ENCODE measurements at regions of chr22 and their contacts with region 1.

Region 1: GRCh38 chr22:36239401-36240171 is at the start of gene APOL2:
- DNase-seq: peak; percentile 92 to 95
- H3K4me3 ChIP-seq: peak within 1 kb of the TSS; percentile 16 to 45 (median 40)
- H3K27ac ChIP-seq: peak within 1 kb of the TSS; percentile 67 to 92 (median 81)
- H3K4me1 ChIP-seq: peaks cover 24 to 30% of the 10 kb centered on the region in 2 donors
- H3K27me3 ChIP-seq: no peaks in the 10 kb centered on the region
- CTCF ChIP-seq: peak in 5 of 6 experiments; percentile 15 to 68 (median 57)
- POLR2A ChIP-seq: peak in 1 of 2 donors; percentile 73
- total RNA-seq, gene APOL2: 31.1 to 45.6 (median 35.6) TPM

Region 2: DNA sequence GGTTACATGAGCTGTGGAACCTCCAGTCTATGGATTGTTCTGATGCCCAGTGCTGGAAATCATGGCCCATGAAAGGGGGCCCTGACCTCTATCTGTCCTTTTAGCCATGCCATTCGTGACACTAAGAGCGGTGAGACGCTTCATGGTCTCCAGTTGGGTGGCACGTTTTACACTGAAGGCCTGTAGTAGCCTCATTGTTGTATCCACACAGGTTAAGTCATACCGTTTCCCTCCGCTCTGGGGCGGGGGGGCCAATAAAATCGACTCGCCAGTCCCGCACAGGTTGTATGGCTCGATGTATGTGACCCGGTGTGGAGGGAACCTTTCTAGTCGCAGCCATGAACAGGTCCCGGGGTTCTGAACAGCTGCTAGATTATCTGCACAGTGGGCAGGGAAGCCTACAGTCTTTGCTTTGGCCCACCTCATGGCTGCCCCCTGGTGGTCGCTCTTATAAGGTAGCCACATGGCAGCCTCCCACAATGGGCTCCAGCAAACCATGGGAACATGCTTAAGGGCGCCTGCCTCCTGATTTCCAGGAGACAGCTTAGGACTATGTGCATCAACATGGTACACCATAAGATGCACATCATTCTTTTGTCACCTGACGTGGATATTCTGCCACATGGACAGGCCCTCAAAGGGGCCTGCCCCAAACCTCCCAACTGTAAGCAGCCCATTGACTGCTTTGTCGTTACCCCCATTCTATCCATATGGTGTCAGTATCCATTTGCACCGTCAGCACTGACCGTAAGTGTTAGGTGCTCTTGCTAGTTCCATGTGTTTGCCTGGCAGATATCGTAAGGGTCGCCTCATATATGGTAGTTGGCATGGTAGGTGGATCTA is 59.3 kb before region 1 on chr22:
- intact Hi-C with region 1: no loop called
- DNase-seq: peak; percentile 79 to 85
- H3K4me3 ChIP-seq: no peak overlapping the region
- H3K27ac ChIP-seq: no peak overlapping the region
- H3K4me1 ChIP-seq: peaks cover 0 to 13% of the 10 kb centered on the region in 2 donors
- H3K27me3 ChIP-seq: no peaks in the 10 kb centered on the region
- CTCF ChIP-seq: peak; percentile 63 to 90 (median 70)
- POLR2A ChIP-seq: no peak

Region 3: DNA sequence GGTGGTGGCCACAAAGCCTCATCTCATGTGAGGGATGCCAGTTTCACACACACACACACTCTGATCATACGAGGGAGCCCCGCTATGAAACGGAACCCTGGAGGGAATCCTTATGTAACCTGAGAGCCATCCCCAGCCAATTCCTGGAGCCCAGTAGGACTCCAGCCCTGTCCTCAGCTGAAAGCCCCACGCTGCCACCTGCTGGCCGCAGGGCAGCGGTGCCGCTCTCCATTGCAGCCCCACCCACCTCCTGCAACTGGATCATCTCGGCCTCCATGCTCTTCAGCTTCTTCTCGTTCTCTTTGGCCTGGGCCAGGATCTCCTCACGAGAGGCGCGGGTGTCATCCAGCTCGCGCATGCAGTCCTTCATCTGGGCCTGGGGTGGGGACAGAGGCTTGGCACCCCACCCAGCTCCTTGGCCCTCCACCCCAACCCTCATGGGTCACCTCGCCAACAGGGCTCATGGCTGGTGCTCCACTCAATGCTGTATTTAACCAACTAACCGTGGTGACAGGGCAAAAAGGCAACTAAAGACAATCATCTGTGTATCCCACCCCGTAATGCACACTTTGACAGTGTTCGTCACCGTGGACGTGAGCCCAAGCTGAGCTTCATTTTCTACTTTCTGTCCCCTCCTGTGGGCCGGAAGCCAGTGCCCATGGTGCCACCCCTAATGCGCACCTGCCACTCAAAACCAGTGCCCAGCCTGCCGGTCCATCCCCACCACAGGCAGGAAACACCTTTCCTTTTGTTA is 47.1 kb after region 1 on chr22:
- intact Hi-C with region 1: loop called (anchors 5 kb)
- DNase-seq: peak; percentile 50 to 67
- H3K4me3 ChIP-seq: no peak overlapping the region
- H3K27ac ChIP-seq: peak overlapping the region in 2 of 3 donors; percentile 12 to 27
- H3K4me1 ChIP-seq: no peaks in the 10 kb centered on the region
- H3K27me3 ChIP-seq: no peaks in the 10 kb centered on the region
- CTCF ChIP-seq: peak; percentile 48 to 88 (median 70)
- POLR2A ChIP-seq: no peak

Region 4: GRCh38 chr22:36301384-36301828 is 61.8 kb after region 1 on chr22:
- intact Hi-C with region 1: no loop called
- DNase-seq: peak; percentile 76 to 84
- H3K4me3 ChIP-seq: no peak overlapping the region
- H3K27ac ChIP-seq: no peak overlapping the region
- H3K4me1 ChIP-seq: no peaks in the 10 kb centered on the region
- H3K27me3 ChIP-seq: no peaks in the 10 kb centered on the region
- CTCF ChIP-seq: peak; percentile 80 to 95 (median 92)
- POLR2A ChIP-seq: no peak

Region 5: GRCh38 chr22:36405671-36406538 is 166.3 kb after region 1 on chr22:
- intact Hi-C with region 1: no loop called
- DNase-seq: peak; percentile 80 to 84
- H3K4me3 ChIP-seq: no peak overlapping the region
- H3K27ac ChIP-seq: peak overlapping the region; percentile 66 to 95 (median 78)
- H3K4me1 ChIP-seq: peaks cover 34 to 42% of the 10 kb centered on the region in 2 donors
- H3K27me3 ChIP-seq: no peaks in the 10 kb centered on the region
- CTCF ChIP-seq: peak in 1 of 6 experiments; percentile 7
- POLR2A ChIP-seq: no peak

Region 6: DNA sequence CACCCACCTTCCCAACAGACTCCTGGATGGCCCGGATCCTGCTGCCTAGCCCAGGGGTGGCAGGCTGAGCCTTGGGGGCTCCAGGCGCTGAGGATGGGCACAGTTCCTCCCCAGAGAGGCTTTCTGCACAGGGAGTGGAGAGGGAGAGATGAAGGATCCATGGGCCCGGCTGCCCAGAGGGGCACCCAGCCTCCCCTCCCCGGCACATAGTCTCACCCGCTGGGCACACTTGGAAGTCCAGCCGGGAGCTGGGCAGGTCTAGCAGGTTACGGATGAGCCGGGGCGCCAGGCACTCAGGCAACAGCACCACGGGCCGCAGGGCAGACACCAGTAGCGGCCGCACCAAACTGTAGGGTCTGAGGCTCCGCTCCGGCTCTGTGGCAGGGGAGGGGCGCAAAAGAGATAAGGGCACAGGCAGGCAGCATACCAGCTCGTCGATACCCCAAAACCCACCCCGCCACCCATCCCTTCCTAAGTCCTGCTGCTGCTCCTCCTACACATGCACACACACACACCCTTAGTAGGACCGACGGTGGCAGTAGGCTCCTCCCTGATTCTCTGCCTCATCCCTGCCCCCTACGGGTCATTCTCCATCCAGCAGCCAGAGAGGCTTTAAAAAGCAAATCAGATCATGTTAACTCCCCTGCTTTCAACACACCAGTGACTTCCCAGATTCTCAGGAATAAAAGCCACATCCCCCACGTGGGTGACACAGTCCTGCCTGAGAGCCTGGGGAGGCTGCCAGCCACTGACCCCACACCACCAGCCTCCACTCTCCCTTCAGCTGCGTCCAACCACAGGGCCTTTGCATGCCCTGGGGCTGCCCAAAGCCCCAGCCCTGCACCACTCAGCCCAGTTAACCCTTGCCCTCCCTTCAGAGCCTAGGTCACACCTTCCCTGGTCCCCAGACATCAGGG is 1253.1 kb after region 1 on chr22:
- intact Hi-C with region 1: no loop called
- DNase-seq: no peak
- H3K4me3 ChIP-seq: no peak overlapping the region
- H3K27ac ChIP-seq: no peak overlapping the region
- H3K4me1 ChIP-seq: no peaks in the 10 kb centered on the region
- H3K27me3 ChIP-seq: no peaks in the 10 kb centered on the region
- CTCF ChIP-seq: peak in 1 of 6 experiments; percentile 20
- POLR2A ChIP-seq: no peak